Naive thymus-derived CD4-positive, alpha-beta T cell (primary cell): ENCODE measurements at regions of chr11 and their contacts with region 1.

Region 1: GRCh38 chr11:96342961-96343711 is at the start of gene MAML2:
- DNase-seq: peak; percentile 67 to 91 (median 85)
- ATAC-seq: peak; percentile 93
- H3K4me3 ChIP-seq: peak within 1 kb of the TSS; percentile 95
- H3K4me3 Mint-ChIP-seq: peak within 1 kb of the TSS; percentile 95 to 99 (median 98)
- H3K27ac ChIP-seq: peak within 1 kb of the TSS; percentile 87
- H3K27ac Mint-ChIP-seq: peak within 1 kb of the TSS; percentile 93 to 98 (median 96)
- H3K4me1 ChIP-seq: peaks cover 11 to 31% of the 10 kb centered on the region in 2 donors
- H3K4me1 Mint-ChIP-seq: peaks cover 13 to 41% (median 19%) of the 10 kb centered on the region in 7 donors
- H3K27me3 ChIP-seq: no peaks in the 10 kb centered on the region
- H3K27me3 Mint-ChIP-seq: no peaks in the 10 kb centered on the region
- total RNA-seq, gene MAML2: 15.6 to 81.3 (median 68.2) TPM

Region 2: GRCh38 chr11:95767498-95767897 is 575.6 kb before region 1 on chr11:
- CTCF ChIA-PET with region 1: no interaction called
- POLR2A ChIA-PET with region 1: no interaction called
- intact Hi-C with region 1: no loop called
- DNase-seq: no peak
- ATAC-seq: no peak
- H3K4me3 ChIP-seq: no peak overlapping the region
- H3K4me3 Mint-ChIP-seq: no peak overlapping the region
- H3K27ac ChIP-seq: no peak overlapping the region
- H3K27ac Mint-ChIP-seq: no peak overlapping the region
- H3K4me1 ChIP-seq: no peaks in the 10 kb centered on the region
- H3K4me1 Mint-ChIP-seq: peaks cover 0 to 2% (median 0%) of the 10 kb centered on the region in 7 donors
- H3K27me3 ChIP-seq: no peaks in the 10 kb centered on the region
- H3K27me3 Mint-ChIP-seq: no peaks in the 10 kb centered on the region

Region 3: DNA sequence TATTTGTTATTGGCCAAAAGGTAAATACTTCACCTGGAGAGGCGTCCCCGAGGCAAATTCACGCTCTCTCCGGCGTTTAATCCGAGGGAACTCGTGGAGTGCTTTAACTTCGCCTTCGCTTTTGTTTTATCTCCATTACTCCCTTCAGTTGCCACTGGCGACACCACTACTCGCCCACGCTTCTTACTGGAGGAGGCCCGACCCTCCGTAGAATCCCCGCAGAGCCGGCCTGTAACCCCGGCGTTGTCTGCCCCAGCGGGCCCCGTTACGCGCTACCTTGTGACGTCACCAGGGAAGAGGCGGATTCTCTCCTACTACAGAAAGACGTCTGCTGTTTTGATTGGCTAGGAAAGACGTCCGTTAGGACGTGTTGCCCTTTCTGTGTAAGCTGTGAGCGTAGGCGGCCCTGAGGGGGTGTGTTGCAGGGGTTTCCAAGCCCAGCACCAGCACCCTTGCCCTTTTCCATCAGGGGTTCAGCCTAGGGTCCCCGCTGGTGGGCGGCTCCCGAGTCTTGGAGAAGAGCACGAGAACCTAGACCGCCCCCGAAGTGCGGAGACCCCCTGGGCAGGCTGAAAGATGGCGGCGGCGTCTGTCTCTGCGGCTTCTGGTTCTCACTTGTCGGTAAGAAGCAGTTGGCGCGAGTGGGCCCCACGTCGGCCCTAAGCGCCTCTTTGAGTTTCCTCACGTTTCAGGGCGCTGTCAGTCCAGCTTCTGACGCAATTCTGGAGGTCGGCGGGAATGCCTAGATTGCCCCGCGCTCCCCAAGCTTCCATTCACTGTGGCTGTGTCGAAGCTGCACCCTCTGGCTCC is 552.8 kb before region 1 on chr11 and contains the start of gene CEP57:
- CTCF ChIA-PET with region 1: interaction called, 3 read pairs
- POLR2A ChIA-PET with region 1: no interaction called
- intact Hi-C with region 1: loop called (anchors 1 kb)
- DNase-seq: peak; percentile 80 to 98 (median 96)
- ATAC-seq: peak; percentile 70
- H3K4me3 ChIP-seq: peak within 1 kb of the TSS; percentile 97
- H3K4me3 Mint-ChIP-seq: peak within 1 kb of the TSS; percentile 93 to 100 (median 100)
- H3K27ac ChIP-seq: peak within 1 kb of the TSS; percentile 99
- H3K27ac Mint-ChIP-seq: peak within 1 kb of the TSS; percentile 100
- H3K4me1 ChIP-seq: peaks cover 21 to 22% of the 10 kb centered on the region in 2 donors
- H3K4me1 Mint-ChIP-seq: peaks cover 47 to 74% (median 61%) of the 10 kb centered on the region in 7 donors
- H3K27me3 ChIP-seq: no peaks in the 10 kb centered on the region
- H3K27me3 Mint-ChIP-seq: no peaks in the 10 kb centered on the region
- total RNA-seq, gene CEP57: 47.8 to 72.3 (median 68.9) TPM

Region 4: GRCh38 chr11:96012086-96012824 is 330.9 kb before region 1 on chr11:
- CTCF ChIA-PET with region 1: interaction called, 71 read pairs
- POLR2A ChIA-PET with region 1: interaction called, 26 read pairs
- intact Hi-C with region 1: loop called (anchors 1 kb)
- DNase-seq: peak in 8 of 9 donors; percentile 23 to 89 (median 80)
- ATAC-seq: peak; percentile 83
- H3K4me3 ChIP-seq: no peak overlapping the region
- H3K4me3 Mint-ChIP-seq: peak overlapping the region; percentile 58 to 87 (median 71)
- H3K27ac ChIP-seq: peak overlapping the region; percentile 58
- H3K27ac Mint-ChIP-seq: peak overlapping the region in 6 of 9 donors; percentile 76 to 98 (median 96)
- H3K4me1 ChIP-seq: peaks cover 39 to 52% of the 10 kb centered on the region in 2 donors
- H3K4me1 Mint-ChIP-seq: peaks cover 12 to 50% (median 28%) of the 10 kb centered on the region in 7 donors
- H3K27me3 ChIP-seq: no peaks in the 10 kb centered on the region
- H3K27me3 Mint-ChIP-seq: no peaks in the 10 kb centered on the region

Region 5: GRCh38 chr11:96105197-96105895 is 237.8 kb before region 1 on chr11:
- CTCF ChIA-PET with region 1: interaction called, 11 read pairs
- POLR2A ChIA-PET with region 1: interaction called, 3 read pairs
- intact Hi-C with region 1: no loop called
- DNase-seq: peak in 7 of 9 donors; percentile 38 to 84 (median 74)
- ATAC-seq: peak; percentile 97
- H3K4me3 ChIP-seq: no peak overlapping the region
- H3K4me3 Mint-ChIP-seq: peak overlapping the region in 7 of 10 donors; percentile 3 to 58 (median 39)
- H3K27ac ChIP-seq: peak overlapping the region; percentile 66
- H3K27ac Mint-ChIP-seq: peak overlapping the region; percentile 59 to 98 (median 95)
- H3K4me1 ChIP-seq: peaks cover 7 to 26% of the 10 kb centered on the region in 2 donors
- H3K4me1 Mint-ChIP-seq: peaks cover 8 to 71% (median 51%) of the 10 kb centered on the region in 7 donors
- H3K27me3 ChIP-seq: no peaks in the 10 kb centered on the region
- H3K27me3 Mint-ChIP-seq: no peaks in the 10 kb centered on the region

Region 6: GRCh38 chr11:96235751-96236150 is 107.4 kb before region 1 on chr11:
- CTCF ChIA-PET with region 1: interaction called, 21 read pairs
- POLR2A ChIA-PET with region 1: interaction called, 9 read pairs
- intact Hi-C with region 1: no loop called
- DNase-seq: peak in 1 of 9 donors; percentile 64
- ATAC-seq: peak; percentile 57
- H3K4me3 ChIP-seq: no peak overlapping the region
- H3K4me3 Mint-ChIP-seq: peak overlapping the region in 8 of 10 donors; percentile 9 to 70 (median 39)
- H3K27ac ChIP-seq: peak overlapping the region; percentile 6
- H3K27ac Mint-ChIP-seq: peak overlapping the region in 6 of 9 donors; percentile 38 to 83 (median 64)
- H3K4me1 ChIP-seq: peaks cover 0 to 53% of the 10 kb centered on the region in 2 donors
- H3K4me1 Mint-ChIP-seq: peaks cover 20 to 40% (median 28%) of the 10 kb centered on the region in 7 donors
- H3K27me3 ChIP-seq: no peaks in the 10 kb centered on the region
- H3K27me3 Mint-ChIP-seq: no peaks in the 10 kb centered on the region

Region 7: GRCh38 chr11:96314326-96315020 is 28.7 kb before region 1 on chr11:
- CTCF ChIA-PET with region 1: interaction called, 6 read pairs
- POLR2A ChIA-PET with region 1: interaction called, 12 read pairs
- intact Hi-C with region 1: loop called in 1 of 2 experiments (anchors 2 kb)
- DNase-seq: peak in 1 of 9 donors; percentile 9
- ATAC-seq: peak; percentile 51
- H3K4me3 ChIP-seq: no peak overlapping the region
- H3K4me3 Mint-ChIP-seq: peak overlapping the region; percentile 14 to 71 (median 60)
- H3K27ac ChIP-seq: peak overlapping the region; percentile 56
- H3K27ac Mint-ChIP-seq: peak overlapping the region; percentile 64 to 95 (median 91)
- H3K4me1 ChIP-seq: peaks cover 27 to 67% of the 10 kb centered on the region in 2 donors
- H3K4me1 Mint-ChIP-seq: peaks cover 53 to 100% (median 98%) of the 10 kb centered on the region in 7 donors
- H3K27me3 ChIP-seq: no peaks in the 10 kb centered on the region
- H3K27me3 Mint-ChIP-seq: no peaks in the 10 kb centered on the region